Aorta (tissue), 5 donors: ENCODE measurements at regions of chr15 and their contacts with region 1.

Region 1: DNA sequence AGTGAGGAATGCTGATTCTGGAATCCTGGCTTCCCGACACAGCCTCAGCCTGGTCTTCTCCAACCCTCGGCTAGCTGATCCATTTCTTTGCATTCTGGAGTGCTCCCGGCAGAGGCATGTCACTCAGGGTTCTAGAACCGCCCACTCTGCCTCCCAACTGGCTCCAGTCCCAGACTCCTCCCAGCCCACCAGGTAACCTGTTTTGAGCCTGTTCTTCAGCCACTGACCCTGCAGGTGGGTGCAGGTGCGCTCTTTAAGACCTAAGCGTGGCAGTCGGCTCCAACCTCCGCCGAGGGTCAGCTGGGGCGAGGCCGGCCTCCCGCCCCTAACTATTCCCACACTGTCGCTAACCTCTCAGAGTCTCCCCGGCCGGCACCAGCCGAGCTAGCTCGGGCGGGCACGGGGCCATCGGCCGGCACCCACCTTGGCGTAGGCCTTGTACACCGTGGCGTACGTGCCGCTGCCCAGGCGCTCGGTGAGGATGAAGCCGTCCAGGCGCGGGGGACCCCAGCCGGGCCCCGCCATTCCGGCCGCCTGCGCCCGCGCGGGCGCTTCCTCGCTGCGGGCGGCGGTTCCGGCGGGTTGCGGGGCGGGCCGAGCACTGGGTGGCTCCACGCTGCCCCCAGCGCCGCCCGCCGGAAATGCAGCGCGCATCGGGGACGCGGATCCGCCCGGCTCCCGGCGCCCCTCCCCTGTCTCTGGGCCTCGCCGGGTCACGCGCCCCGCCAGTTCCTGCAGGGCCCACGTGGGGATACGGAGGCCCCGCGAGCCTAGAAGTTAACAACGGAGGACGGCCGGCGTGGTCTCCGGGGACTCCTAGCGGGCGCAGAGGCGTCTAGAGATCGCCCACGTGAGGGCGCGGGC is at the start of gene ULK3:
- DNase-seq: peak; percentile 94 to 97
- ATAC-seq: peak; percentile 96
- H3K4me3 ChIP-seq: peak within 1 kb of the TSS; percentile 37 to 44
- H3K27ac ChIP-seq: peak within 1 kb of the TSS in 1 of 2 donors; percentile 61
- H3K4me1 ChIP-seq: no peaks in the 10 kb centered on the region
- H3K27me3 ChIP-seq: no peaks in the 10 kb centered on the region
- total RNA-seq, gene ULK3: 19.3 to 31.6 TPM

Region 2: GRCh38 chr15:74787251-74788041 is 55.4 kb before region 1 on chr15:
- intact Hi-C with region 1: loop called in 1 of 2 experiments (anchors 5 kb)
- DNase-seq: peak in 1 of 2 donors; percentile 90
- ATAC-seq: peak; percentile 32
- H3K4me3 ChIP-seq: no peak overlapping the region
- H3K27ac ChIP-seq: no peak overlapping the region
- H3K4me1 ChIP-seq: peaks cover 0 to 5% of the 10 kb centered on the region in 2 donors
- H3K27me3 ChIP-seq: no peaks in the 10 kb centered on the region

Region 3: GRCh38 chr15:74889883-74890664 is 47.3 kb after region 1 on chr15 and contains the start of gene MPI:
- intact Hi-C with region 1: loop called in 1 of 2 experiments (anchors 10 kb)
- DNase-seq: peak; percentile 92 to 95
- ATAC-seq: peak; percentile 95
- H3K4me3 ChIP-seq: peak within 1 kb of the TSS; percentile 9 to 51
- H3K27ac ChIP-seq: peak within 1 kb of the TSS in 1 of 2 donors; percentile 8
- H3K4me1 ChIP-seq: no peaks in the 10 kb centered on the region
- H3K27me3 ChIP-seq: no peaks in the 10 kb centered on the region
- total RNA-seq, gene MPI: 24.4 to 31.1 TPM

Region 4: DNA sequence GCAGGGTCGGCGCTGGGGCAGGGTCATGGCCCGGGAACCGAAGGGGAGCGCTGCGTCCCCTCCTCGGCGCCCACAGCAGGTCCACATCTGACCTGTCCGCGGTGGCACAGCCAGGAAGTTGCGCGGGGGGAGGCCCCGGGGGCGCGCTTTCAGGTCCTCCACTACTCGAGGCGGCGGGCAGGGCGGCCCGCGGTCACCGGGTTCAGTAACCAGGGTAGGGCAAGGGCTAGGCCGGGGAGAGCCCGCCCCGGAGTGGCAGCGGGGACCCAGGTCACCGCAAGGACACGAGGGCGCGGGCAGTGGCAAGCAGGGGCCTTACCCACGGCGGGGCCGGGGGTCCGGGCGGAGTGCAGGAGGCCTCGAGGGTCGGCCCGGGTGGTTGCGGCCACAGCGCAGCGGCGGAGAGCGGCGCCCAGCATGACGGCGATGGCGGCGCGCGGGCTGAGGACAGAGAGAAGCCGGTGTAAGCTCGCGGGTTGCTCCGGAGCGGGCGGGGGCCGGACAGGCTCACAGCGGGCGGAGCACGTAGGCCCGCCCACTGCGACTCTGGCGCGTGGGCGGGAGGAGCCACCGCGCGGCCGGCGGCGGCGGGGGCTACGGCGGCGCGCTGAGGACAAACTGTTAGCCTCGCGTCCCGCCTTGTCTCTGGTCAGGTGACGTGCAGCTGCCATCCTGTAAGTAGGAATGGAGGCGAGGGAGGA is 94.9 kb after region 1 on chr15 and contains the start of gene COX5A:
- intact Hi-C with region 1: loop called in 1 of 2 experiments (anchors 5 kb)
- DNase-seq: peak; percentile 96 to 97
- ATAC-seq: peak; percentile 99
- H3K4me3 ChIP-seq: peak within 1 kb of the TSS; percentile 65 to 77
- H3K27ac ChIP-seq: peak within 1 kb of the TSS in 1 of 2 donors; percentile 49
- H3K4me1 ChIP-seq: no peaks in the 10 kb centered on the region
- H3K27me3 ChIP-seq: no peaks in the 10 kb centered on the region
- total RNA-seq, gene COX5A: 72.6 to 79.6 TPM